Adrenal gland (tissue), 19 donors: ENCODE measurements at regions of chr2 and their contacts with region 1.

Region 1: GRCh38 chr2:238060542-238061314 is at the start of gene SCLY:
- DNase-seq: peak; percentile 97 to 98 (median 98)
- H3K4me3 ChIP-seq: peak within 1 kb of the TSS; percentile 65 to 99 (median 85)
- H3K27ac ChIP-seq: peak within 1 kb of the TSS; percentile 50 to 93 (median 88)
- H3K4me1 ChIP-seq: peaks cover 0 to 14% of the 10 kb centered on the region in 2 donors
- H3K27me3 ChIP-seq: no peaks in the 10 kb centered on the region
- CTCF ChIP-seq: peak in 2 of 6 experiments; percentile 4 to 11
- POLR2A ChIP-seq: peak; percentile 77 to 89
- total RNA-seq, gene SCLY: 2.4 to 11.0 (median 7.8) TPM

Region 2: DNA sequence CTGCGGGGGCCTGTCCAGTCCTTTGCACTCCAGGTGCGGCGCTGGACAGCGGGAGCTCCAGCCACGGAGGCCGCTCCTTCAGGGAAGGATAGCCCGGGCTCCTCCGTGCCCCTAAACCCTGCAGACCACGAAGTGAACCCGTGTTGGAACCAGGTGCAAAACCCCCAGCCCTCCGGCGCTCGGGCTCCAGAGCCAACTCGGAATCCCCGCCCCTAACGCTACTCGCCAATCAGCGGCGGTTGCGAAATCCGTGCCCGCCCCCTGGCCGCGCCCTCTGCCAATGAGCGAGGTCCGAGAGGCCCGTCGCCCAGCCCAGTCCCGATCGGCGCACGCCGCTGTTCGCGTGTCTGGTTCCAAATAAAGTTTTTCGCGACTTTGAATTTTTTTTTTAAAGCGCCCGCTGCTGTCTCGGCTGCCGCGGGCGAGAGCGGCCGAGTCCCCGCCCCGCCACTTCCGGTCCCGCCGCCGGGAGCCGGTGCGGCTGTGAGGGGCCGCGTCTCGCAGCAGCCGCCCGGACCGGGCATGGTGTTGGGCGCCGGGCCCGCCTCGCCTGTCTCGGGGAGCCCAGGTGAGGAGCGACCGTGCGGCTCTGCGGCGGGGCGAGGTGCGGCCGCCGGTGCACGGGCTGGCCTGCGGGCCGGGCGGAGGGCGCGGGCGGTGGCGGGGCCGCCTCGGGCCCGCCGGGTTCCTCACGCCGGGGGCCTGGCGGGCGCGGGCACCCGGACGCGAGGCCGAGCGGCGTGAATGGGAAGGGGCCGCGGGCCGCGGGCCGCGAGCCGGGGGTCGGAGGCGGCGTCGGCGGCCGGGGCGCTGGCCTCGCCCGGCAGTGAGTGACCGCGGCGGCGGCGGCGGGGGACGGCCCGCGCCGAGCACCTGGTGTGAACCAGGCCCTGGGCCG is 93.9 kb before region 1 on chr2 and contains the start of gene UBE2F:
- intact Hi-C with region 1: loop called in 1 of 2 experiments (anchors 5 kb)
- DNase-seq: peak; percentile 97 to 98 (median 98)
- H3K4me3 ChIP-seq: peak within 1 kb of the TSS; percentile 45 to 78 (median 68)
- H3K27ac ChIP-seq: peak within 1 kb of the TSS in 4 of 5 donors; percentile 40 to 92 (median 68)
- H3K4me1 ChIP-seq: peaks cover 18 to 26% of the 10 kb centered on the region in 2 donors
- H3K27me3 ChIP-seq: no peaks in the 10 kb centered on the region
- CTCF ChIP-seq: peak in 1 of 6 experiments; percentile 8
- POLR2A ChIP-seq: peak; percentile 74 to 89
- total RNA-seq, gene UBE2F: 37.9 to 101 (median 56.1) TPM

Region 3: GRCh38 chr2:238160206-238161109 is 99.7 kb after region 1 on chr2:
- intact Hi-C with region 1: no loop called
- DNase-seq: no peak
- H3K4me3 ChIP-seq: no peak overlapping the region
- H3K27ac ChIP-seq: no peak overlapping the region
- H3K4me1 ChIP-seq: peaks cover 0 to 4% of the 10 kb centered on the region in 2 donors
- H3K27me3 ChIP-seq: peaks cover 16% of the 10 kb centered on the region
- CTCF ChIP-seq: no peak
- POLR2A ChIP-seq: no peak